Activated CD4-positive, alpha-beta memory T cell treated with anti-CD3 and anti-CD28 coated beads for 36 hours (primary cell): ENCODE measurements at regions of chr10 and their contacts with region 1.

Region 1: GRCh38 chr10:99430451-99431189 is at the start of gene GOT1:
- DNase-seq: peak; percentile 98
- H3K4me3 Mint-ChIP-seq: peak within 1 kb of the TSS; percentile 99
- H3K27ac Mint-ChIP-seq: peak within 1 kb of the TSS; percentile 90
- H3K4me1 Mint-ChIP-seq: peaks cover 32% of the 10 kb centered on the region
- H3K27me3 Mint-ChIP-seq: no peaks in the 10 kb centered on the region
- total RNA-seq, gene GOT1: 51.6 to 54.9 TPM

Region 2: DNA sequence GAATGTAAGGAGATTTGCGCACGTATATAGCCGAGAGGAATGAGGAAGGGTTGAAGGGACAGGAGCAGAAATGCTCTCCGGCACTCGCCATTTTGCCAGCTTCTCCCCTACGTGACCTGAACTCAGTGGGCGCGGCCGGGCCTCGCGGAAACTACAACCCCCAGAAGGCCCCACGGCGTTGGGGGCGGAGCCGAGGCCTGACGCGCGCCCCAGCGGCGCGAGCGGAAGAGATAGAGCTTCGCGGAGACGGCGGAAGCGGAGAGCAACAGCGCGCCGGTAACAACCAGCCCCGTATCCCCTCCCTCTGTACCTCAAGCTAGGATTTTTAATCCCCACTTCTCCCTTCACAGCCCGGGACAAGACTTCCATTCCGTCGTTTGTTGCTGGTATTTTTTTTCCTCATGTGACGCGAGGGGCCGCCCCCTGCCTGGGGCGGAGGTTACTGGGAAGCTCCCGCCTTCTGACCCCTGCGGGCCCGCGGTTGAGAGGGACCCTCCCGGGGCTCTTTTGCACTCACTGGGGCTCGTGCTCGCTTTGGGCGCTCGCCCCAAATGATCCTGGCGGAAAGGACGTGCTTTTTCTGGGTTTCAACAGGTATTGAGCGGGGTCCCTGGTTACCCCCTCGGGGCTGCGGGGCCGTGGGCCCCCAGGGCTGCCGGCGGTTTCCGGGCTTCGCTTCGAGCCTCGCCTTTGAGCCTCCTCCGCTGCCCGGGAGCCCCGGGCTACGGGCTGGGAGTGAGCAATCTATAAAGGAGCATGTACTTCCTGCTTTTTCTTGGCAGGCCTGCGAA is 1296.0 kb before region 1 on chr10 and contains the start of gene R3HCC1L:
- CTCF ChIA-PET with region 1: no interaction called
- POLR2A ChIA-PET with region 1: no interaction called
- intact Hi-C with region 1: loop called (anchors 2 kb)
- DNase-seq: peak; percentile 97
- H3K4me3 Mint-ChIP-seq: peak within 1 kb of the TSS; percentile 94
- H3K27ac Mint-ChIP-seq: peak within 1 kb of the TSS; percentile 85
- H3K4me1 Mint-ChIP-seq: peaks cover 43% of the 10 kb centered on the region
- H3K27me3 Mint-ChIP-seq: no peaks in the 10 kb centered on the region
- total RNA-seq, gene R3HCC1L: 13.2 to 13.3 TPM

Region 3: DNA sequence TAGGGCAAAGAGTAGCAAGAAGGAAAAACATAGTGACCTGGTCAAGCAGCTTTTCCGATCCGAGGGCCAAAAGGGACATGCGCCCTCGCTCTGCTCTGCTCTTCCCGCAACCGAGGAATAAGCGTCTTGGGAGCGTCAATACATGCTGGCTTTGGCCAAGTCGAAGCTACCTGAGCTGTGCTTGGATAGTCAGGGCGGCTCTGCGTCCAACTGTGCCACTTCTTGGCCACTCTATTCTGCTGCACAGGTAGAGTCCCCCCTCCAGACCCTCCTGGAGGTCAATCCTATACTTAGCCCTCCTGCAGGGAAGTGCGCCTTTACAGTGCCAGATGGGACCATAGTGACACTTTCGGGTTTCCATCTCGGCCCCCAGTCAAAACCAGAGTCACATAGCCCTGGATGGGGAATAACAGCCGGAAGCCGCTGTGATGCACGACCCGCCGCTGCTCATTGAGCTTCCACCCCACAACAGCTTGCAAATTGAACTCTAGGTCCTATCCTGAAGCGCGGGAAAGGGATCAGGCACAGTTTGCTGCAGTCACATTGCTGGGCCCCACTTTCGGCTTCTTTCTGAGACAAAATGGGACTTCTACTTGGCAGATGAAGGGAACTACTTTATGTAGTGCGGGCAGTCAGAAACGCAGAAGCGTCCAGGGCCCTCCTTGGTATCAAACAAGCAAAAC is 193.9 kb before region 1 on chr10:
- CTCF ChIA-PET with region 1: no interaction called
- POLR2A ChIA-PET with region 1: no interaction called
- intact Hi-C with region 1: no loop called
- DNase-seq: no peak
- H3K4me3 Mint-ChIP-seq: no peak overlapping the region
- H3K27ac Mint-ChIP-seq: no peak overlapping the region
- H3K4me1 Mint-ChIP-seq: peaks cover 31% of the 10 kb centered on the region
- H3K27me3 Mint-ChIP-seq: peaks cover 58% of the 10 kb centered on the region

Region 4: GRCh38 chr10:99395750-99396445 is 34.7 kb before region 1 on chr10:
- CTCF ChIA-PET with region 1: interaction called, 6 read pairs
- POLR2A ChIA-PET with region 1: no interaction called
- intact Hi-C with region 1: loop called (anchors 2 kb)
- DNase-seq: no peak
- H3K4me3 Mint-ChIP-seq: no peak overlapping the region
- H3K27ac Mint-ChIP-seq: no peak overlapping the region
- H3K4me1 Mint-ChIP-seq: peaks cover 2% of the 10 kb centered on the region
- H3K27me3 Mint-ChIP-seq: no peaks in the 10 kb centered on the region

Region 5: DNA sequence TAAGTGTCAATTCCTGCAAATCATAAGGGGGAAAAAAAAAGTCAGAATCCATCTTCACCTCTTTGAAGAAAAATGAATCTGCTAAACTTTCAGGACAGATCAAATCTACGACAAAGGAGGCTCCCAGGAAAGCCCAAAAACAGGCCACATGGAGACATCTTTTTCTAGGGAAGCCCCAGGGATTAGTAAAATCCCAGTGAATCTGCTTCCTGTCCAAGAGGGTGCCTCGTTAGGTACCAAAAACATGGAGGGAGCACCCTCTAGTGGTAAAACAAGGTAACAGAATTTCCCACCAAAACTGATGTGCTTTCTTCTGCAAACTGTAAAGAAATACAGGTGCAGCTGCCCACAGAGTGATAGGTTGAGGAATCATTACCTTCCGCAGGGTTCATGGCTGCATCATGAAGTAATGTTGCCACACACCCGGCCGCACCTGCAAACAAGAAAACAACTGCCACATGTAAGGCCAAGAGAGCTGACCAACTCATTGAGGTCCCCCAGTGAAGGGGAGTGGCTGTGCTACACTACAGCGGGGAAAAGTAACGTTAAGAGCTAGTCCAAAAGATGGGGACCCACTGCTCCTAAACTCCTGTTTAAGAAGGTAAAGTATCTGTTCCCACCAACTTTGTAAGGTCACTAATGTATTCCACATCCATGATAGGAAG is 181.7 kb after region 1 on chr10:
- CTCF ChIA-PET with region 1: interaction called, 106 read pairs
- POLR2A ChIA-PET with region 1: interaction called, 7 read pairs
- intact Hi-C with region 1: no loop called
- DNase-seq: no peak
- H3K4me3 Mint-ChIP-seq: no peak overlapping the region
- H3K27ac Mint-ChIP-seq: peak overlapping the region; percentile 70
- H3K4me1 Mint-ChIP-seq: peaks cover 42% of the 10 kb centered on the region
- H3K27me3 Mint-ChIP-seq: no peaks in the 10 kb centered on the region

Region 6: GRCh38 chr10:99711129-99711719 is 280.6 kb after region 1 on chr10:
- CTCF ChIA-PET with region 1: interaction called, 9 read pairs
- POLR2A ChIA-PET with region 1: no interaction called
- intact Hi-C with region 1: loop called (anchors 2 kb)
- DNase-seq: peak; percentile 31
- H3K4me3 Mint-ChIP-seq: no peak overlapping the region
- H3K27ac Mint-ChIP-seq: no peak overlapping the region
- H3K4me1 Mint-ChIP-seq: peaks cover 11% of the 10 kb centered on the region
- H3K27me3 Mint-ChIP-seq: no peaks in the 10 kb centered on the region